MCF 10A (cell line): ENCODE measurements at regions of chr6 and their contacts with region 1.

Region 1: GRCh38 chr6:70221025-70221714 is 81.7 kb downstream of the COL9A1 start:
- DNase-seq: peak; percentile 33
- H3K4me3 Mint-ChIP-seq: no peak overlapping the region
- H3K27ac Mint-ChIP-seq: no peak overlapping the region
- H3K4me1 Mint-ChIP-seq: no peaks in the 10 kb centered on the region
- H3K27me3 Mint-ChIP-seq: peaks cover 100% of the 10 kb centered on the region
- CTCF ChIP-seq: peak; percentile 71

Region 2: GRCh38 chr6:70210462-70210861 is 10.7 kb before region 1 on chr6:
- CTCF ChIA-PET with region 1: interaction called, 30 read pairs
- POLR2A ChIA-PET with region 1: no interaction called
- intact Hi-C with region 1: no loop called
- DNase-seq: peak; percentile 12
- H3K4me3 Mint-ChIP-seq: no peak overlapping the region
- H3K27ac Mint-ChIP-seq: no peak overlapping the region
- H3K4me1 Mint-ChIP-seq: no peaks in the 10 kb centered on the region
- H3K27me3 Mint-ChIP-seq: peaks cover 94% of the 10 kb centered on the region
- CTCF ChIP-seq: peak; percentile 23

Region 3: GRCh38 chr6:70241991-70242420 is 20.8 kb after region 1 on chr6:
- CTCF ChIA-PET with region 1: interaction called, 25 read pairs
- POLR2A ChIA-PET with region 1: no interaction called
- intact Hi-C with region 1: no loop called
- DNase-seq: no peak
- H3K4me3 Mint-ChIP-seq: no peak overlapping the region
- H3K27ac Mint-ChIP-seq: no peak overlapping the region
- H3K4me1 Mint-ChIP-seq: no peaks in the 10 kb centered on the region
- H3K27me3 Mint-ChIP-seq: peaks cover 95% of the 10 kb centered on the region
- CTCF ChIP-seq: no peak

Region 4: DNA sequence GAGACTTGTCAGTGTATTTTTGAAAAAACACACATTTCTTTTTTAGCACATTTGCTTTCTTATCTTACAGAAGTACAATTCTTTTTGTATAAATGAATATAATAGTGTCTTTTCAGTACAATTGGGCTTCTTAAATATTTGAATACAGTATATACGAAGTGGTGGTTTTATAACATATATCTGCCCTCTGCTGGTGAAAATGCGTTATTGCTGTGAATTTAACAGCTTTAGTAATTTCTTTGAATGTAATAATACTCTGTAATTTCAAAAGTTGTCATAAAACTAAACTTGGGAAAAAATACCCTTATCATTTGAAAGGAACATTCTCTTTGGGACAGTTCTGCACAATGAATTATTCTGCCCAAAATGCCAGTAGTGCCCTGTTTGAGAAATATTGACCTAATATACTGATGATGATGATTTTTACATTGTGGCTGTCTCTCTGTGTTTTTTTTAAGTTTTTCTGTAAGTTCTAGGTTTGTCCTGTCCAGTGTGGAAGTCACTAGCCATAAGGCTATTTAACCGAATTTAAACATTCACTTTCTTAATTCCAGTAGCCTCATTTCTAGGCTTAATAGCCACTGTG is 465.5 kb after region 1 on chr6:
- CTCF ChIA-PET with region 1: interaction called, 3 read pairs
- POLR2A ChIA-PET with region 1: no interaction called
- intact Hi-C with region 1: loop called (anchors 5 kb)
- DNase-seq: peak; percentile 42
- H3K4me3 Mint-ChIP-seq: no peak overlapping the region
- H3K27ac Mint-ChIP-seq: no peak overlapping the region
- H3K4me1 Mint-ChIP-seq: no peaks in the 10 kb centered on the region
- H3K27me3 Mint-ChIP-seq: no peaks in the 10 kb centered on the region
- CTCF ChIP-seq: peak; percentile 37

Region 5: DNA sequence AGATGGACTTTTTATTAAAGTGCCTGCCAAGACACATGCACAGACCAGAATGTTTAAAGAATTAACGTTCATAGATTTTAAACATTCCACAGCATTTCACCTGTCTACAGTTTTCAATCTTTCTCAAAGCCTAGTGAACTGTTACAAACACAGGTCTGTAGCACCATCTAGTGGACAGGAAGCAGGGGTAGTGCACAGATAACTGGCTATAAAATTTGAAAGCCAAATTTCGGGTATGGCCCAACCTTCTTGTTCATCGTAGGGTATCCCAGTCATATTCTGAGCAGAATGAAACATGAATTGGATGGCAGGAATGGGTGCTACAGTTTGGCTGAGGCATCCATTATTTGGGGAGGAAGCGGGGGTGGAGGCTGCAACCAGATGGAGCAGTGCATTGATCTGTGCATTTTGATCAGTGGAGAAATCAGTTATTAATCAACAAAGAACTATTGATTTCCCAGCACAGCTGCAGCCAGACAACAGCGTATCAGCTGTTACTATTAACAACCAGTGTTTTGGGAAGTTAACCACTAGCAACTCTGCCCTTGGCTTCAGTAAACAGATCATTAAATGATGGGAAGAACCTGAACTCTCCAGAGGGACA is 791.8 kb after region 1 on chr6:
- CTCF ChIA-PET with region 1: interaction called, 9 read pairs
- POLR2A ChIA-PET with region 1: no interaction called
- intact Hi-C with region 1: loop called (anchors 1 kb)
- DNase-seq: peak; percentile 73
- H3K4me3 Mint-ChIP-seq: no peak overlapping the region
- H3K27ac Mint-ChIP-seq: no peak overlapping the region
- H3K4me1 Mint-ChIP-seq: no peaks in the 10 kb centered on the region
- H3K27me3 Mint-ChIP-seq: peaks cover 56% of the 10 kb centered on the region
- CTCF ChIP-seq: peak; percentile 82